ENCODE measurements at regions of chr7 and their contacts with region 1.

Region 1: DNA sequence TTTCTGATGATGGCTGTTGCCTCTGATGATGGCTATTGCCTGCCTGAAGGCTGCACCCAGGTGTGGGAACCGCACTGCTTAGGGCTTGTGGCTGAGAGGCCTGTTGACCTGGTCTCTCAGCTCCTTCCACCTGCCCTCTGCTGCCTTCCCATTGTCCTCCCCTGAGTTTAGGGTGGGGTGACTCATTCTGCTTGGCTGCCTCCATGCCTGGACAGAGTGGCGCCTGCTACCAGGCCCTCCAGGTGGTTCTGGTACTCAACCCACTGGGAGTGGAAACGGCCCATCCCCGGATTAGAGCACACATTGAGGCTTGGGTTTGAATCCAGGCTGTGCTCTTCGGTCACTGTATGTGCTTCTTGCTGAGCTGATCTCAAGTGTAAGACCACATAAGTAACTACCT is 120.6 kb downstream of the SEM1 start:
- DNase-seq: no peak
- ATAC-seq: no peak
- H3K4me3 ChIP-seq: no peak overlapping the region
- H3K27ac ChIP-seq: no peak overlapping the region
- H3K4me1 ChIP-seq: no peaks in the 10 kb centered on the region
- H3K27me3 ChIP-seq: peaks cover 0 to 2% (median 0%) of the 10 kb centered on the region in 9 donors
- CTCF ChIP-seq: no peak
- POLR2A ChIP-seq: no peak

Region 2: GRCh38 chr7:96649981-96650380 is 60.9 kb after region 1 on chr7:
- intact Hi-C with region 1: loop called in 1 of 10 experiments (anchors 10 kb)
- DNase-seq: no peak
- ATAC-seq: no peak
- H3K4me3 ChIP-seq: no peak overlapping the region
- H3K27ac ChIP-seq: no peak overlapping the region
- H3K4me1 ChIP-seq: no peaks in the 10 kb centered on the region
- H3K27me3 ChIP-seq: no peaks in the 10 kb centered on the region
- CTCF ChIP-seq: no peak
- POLR2A ChIP-seq: no peak

Measured in heart left ventricle (tissue), 16 donors.